Mammary epithelial cell (primary cell): ENCODE measurements at regions of chr18 and their contacts with region 1.

Region 1: GRCh38 chr18:51009072-51009471 is 20.9 kb upstream of the SMAD4 start:
- DNase-seq: no peak
- H3K4me3 ChIP-seq: no peak overlapping the region
- H3K27ac ChIP-seq: no peak overlapping the region
- H3K4me1 ChIP-seq: no peaks in the 10 kb centered on the region
- H3K27me3 ChIP-seq: no peaks in the 10 kb centered on the region
- CTCF ChIP-seq: no peak

Region 2: DNA sequence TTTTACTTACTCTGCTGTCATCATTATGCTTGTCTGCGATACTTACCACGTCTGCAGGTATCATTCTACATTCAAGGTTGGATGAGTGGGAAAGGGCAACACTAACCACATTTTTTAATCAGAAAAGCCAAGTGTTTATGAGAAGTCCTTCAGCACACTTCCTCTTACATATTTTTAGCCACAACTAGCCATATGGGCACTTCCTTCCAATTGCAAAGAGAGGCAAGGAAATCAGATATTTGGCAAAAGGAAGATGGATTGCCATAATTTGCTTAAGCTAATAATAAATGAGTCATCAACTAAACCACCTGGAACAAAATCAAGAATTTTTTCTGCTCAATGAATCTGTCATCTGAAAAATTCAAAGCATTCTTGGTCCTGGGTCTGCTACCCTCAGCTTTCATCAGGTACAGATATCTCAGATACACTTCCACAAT is 172.5 kb before region 1 on chr18:
- CTCF ChIA-PET with region 1: no interaction called
- dilution Hi-C with region 1: loop called (anchors 10 kb)
- in situ Hi-C with region 1: no loop called
- intact Hi-C with region 1: no loop called
- DNase-seq: peak; percentile 81
- H3K4me3 ChIP-seq: no peak overlapping the region
- H3K27ac ChIP-seq: no peak overlapping the region
- H3K4me1 ChIP-seq: peaks cover 19% of the 10 kb centered on the region
- H3K27me3 ChIP-seq: no peaks in the 10 kb centered on the region
- CTCF ChIP-seq: no peak

Region 3: GRCh38 chr18:52572036-52573000 is 1563.2 kb after region 1 on chr18:
- CTCF ChIA-PET with region 1: no interaction called
- dilution Hi-C with region 1: no loop called
- in situ Hi-C with region 1: no loop called
- intact Hi-C with region 1: no loop called
- DNase-seq: no peak
- H3K4me3 ChIP-seq: no peak overlapping the region
- H3K27ac ChIP-seq: no peak overlapping the region
- H3K4me1 ChIP-seq: no peaks in the 10 kb centered on the region
- H3K27me3 ChIP-seq: no peaks in the 10 kb centered on the region
- CTCF ChIP-seq: no peak